Activated CD8-positive, alpha-beta T cell treated with anti-CD3 and anti-CD28 coated beads, Interleukin-2, amount 10 ng/mL, durations not matched to agents 7 days and 5 days (primary cell): ENCODE measurements at regions of chr3 and their contacts with region 1.

Region 1: GRCh38 chr3:98022978-98023820 is 11.9 kb downstream of the GABRR3 start:
- DNase-seq: peak; percentile 93
- ATAC-seq: peak; percentile 84
- H3K4me3 Mint-ChIP-seq: no peak overlapping the region
- H3K27ac Mint-ChIP-seq: no peak overlapping the region
- H3K4me1 Mint-ChIP-seq: peaks cover 7% of the 10 kb centered on the region
- H3K27me3 Mint-ChIP-seq: peaks cover 10% of the 10 kb centered on the region

Region 2: DNA sequence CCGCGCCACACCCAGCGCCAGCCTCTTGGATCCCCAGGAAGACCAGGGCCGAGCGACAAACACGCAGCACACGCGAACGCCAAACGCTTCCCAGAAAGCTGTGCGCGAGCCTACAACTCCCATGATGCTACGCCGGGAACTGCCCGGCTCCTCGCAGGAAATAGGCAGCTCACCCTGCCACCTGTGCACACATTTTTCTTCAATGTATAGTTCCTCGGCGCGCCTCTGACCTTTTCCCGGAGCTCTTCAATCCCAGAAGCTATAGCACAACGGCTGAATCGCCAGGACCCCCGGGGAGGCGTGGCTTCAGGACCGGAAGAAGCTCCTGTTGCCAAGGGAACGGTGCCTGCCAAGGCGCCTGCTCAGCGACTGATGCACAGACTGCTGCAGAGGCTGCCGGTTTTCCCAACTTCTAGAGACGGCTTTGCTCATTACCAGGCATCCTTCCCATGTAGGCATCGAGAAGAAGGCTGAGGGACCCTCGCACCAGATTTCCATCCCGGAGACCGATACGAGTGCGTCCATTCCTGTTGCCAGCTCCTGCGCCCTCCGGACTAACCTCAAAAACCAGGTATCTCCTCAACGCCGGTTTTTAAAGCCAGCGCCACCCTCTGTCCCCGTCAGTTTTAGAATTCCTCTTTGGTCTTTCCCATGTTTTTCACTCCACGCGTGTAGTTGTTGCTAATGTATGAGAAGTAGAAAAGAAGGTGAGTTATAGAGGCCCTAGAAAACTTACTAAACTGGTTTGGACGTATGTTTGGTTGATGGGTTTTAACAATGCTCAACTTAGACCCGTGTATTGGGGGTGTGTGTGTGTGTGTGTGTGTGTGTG is 258.6 kb before region 1 on chr3 and contains the start of gene ARL6:
- CTCF ChIA-PET with region 1: interaction called, 10 read pairs
- POLR2A ChIA-PET with region 1: no interaction called
- DNase-seq: peak; percentile 80
- ATAC-seq: peak; percentile 95
- H3K4me3 Mint-ChIP-seq: peak within 1 kb of the TSS; percentile 98
- H3K27ac Mint-ChIP-seq: peak within 1 kb of the TSS; percentile 89
- H3K4me1 Mint-ChIP-seq: peaks cover 23% of the 10 kb centered on the region
- H3K27me3 Mint-ChIP-seq: peaks cover 3% of the 10 kb centered on the region
- total RNA-seq, gene ARL6: 5.0 to 6.6 TPM

Region 3: GRCh38 chr3:97821810-97822775 is 201.1 kb before region 1 on chr3 and contains the start of gene CRYBG3:
- CTCF ChIA-PET with region 1: interaction called, 48 read pairs
- POLR2A ChIA-PET with region 1: interaction called, 3 read pairs
- DNase-seq: peak; percentile 85
- ATAC-seq: peak; percentile 99
- H3K4me3 Mint-ChIP-seq: peak within 1 kb of the TSS; percentile 84
- H3K27ac Mint-ChIP-seq: peak within 1 kb of the TSS; percentile 79
- H3K4me1 Mint-ChIP-seq: peaks cover 19% of the 10 kb centered on the region
- H3K27me3 Mint-ChIP-seq: peaks cover 37% of the 10 kb centered on the region
- total RNA-seq, gene CRYBG3: 1.6 to 1.8 TPM

Region 4: DNA sequence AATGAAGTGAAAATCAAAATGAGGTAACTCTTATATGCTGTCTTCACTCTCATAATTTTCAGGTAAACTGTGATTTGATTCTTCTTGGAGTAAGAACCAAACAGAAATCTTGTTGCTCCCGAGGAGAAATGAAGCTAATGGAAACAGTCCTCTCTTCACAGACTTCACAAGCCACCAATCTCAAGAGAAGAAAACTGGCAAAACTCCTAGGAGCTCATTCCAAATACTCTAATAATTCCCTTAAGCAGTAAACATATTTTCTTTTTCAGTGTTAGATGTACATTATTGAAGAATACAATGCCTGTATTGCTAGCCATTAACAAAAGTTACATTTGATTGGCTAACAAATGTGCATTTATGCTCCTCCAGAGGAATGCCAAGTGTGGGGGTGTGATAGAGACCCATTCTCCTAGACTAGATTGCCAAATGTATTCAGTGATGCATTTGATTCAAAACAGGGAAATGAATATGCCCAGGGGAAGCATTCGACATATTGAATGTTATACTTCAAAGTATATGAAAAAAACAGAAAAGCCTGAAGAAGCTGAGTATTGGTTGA is 39.2 kb before region 1 on chr3:
- CTCF ChIA-PET with region 1: interaction called, 18 read pairs
- POLR2A ChIA-PET with region 1: no interaction called
- DNase-seq: no peak
- ATAC-seq: no peak
- H3K4me3 Mint-ChIP-seq: no peak overlapping the region
- H3K27ac Mint-ChIP-seq: no peak overlapping the region
- H3K4me1 Mint-ChIP-seq: peaks cover 20% of the 10 kb centered on the region
- H3K27me3 Mint-ChIP-seq: no peaks in the 10 kb centered on the region

Region 5: DNA sequence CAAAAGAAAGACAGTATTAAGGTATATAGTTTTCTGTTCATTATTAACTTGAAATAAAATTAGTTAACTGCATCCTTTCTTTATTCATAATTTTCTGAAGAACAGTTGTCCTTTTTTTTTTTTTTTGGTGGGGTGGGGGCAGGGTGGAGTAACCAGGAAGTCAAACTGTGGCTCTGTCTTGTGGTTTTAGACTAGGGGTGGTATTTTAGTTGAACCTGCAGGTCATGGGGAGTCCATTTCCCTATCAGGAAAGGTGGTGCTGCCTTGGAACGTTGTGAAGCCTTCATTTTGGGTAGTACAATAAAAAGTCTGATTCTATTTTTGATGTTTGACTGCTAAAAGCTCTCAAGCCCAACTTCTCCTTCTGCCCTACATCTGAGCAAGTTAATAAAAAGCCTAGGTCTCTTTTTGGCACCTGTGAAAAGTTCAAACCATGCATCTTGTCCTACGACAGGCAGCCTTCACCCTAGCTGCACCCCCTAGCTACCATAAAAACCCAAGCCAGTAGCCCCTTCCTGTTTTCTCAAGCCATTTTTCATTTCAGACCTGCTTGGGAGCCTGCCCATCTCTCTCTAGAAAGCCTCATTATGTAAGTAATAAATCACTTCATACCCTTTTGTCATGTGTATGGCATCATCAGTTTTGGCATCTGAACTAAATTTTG is 19.8 kb before region 1 on chr3:
- CTCF ChIA-PET with region 1: interaction called, 25 read pairs
- POLR2A ChIA-PET with region 1: no interaction called
- DNase-seq: no peak
- ATAC-seq: no peak
- H3K4me3 Mint-ChIP-seq: peak overlapping the region; percentile 2
- H3K27ac Mint-ChIP-seq: peak overlapping the region; percentile 62
- H3K4me1 Mint-ChIP-seq: peaks cover 16% of the 10 kb centered on the region
- H3K27me3 Mint-ChIP-seq: peaks cover 9% of the 10 kb centered on the region